Activated B cell treated with CpG ODN at 0.5 μM for 24 hours (primary cell): ENCODE measurements at regions of chr21 and their contacts with region 1.

Region 1: DNA sequence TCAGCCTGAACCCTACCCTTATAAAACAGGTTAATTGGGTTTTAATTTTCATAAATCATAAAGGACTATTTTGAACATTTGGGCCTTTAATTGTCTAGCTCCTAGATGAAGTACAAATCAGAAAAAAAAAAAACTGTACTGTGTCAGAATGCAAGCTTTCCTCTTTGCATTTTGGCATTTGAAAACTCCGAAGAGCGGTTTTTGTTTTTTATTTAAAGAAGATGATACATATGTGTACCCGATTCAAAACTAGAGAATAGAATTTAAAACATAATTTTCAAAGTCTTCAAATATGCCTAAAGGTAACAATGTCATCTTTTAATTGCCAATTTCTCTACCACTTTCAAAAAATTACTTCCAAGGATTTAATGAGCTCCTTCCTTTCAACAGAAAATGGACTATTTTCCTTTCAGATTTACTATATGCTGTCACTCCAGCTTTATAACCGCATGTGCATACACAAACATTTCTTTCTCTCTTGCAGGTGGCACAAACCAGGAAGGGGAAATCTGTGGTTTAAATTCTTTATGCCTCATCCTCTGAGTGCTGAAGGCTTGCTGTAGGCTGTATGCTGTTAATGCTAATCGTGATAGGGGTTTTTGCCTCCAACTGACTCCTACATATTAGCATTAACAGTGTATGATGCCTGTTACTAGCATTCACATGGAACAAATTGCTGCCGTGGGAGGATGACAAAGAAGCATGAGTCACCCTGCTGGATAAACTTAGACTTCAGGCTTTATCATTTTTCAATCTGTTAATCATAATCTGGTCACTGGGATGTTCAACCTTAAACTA is 33.7 kb downstream of the MRPL39 start:
- DNase-seq: no peak
- ATAC-seq: peak; percentile 53
- H3K4me3 Mint-ChIP-seq: peak overlapping the region; percentile 75
- H3K27ac Mint-ChIP-seq: peak overlapping the region; percentile 90
- H3K4me1 Mint-ChIP-seq: peaks cover 90% of the 10 kb centered on the region
- H3K27me3 Mint-ChIP-seq: no peaks in the 10 kb centered on the region
- CTCF ChIP-seq: no peak

Region 2: GRCh38 chr21:25494804-25495203 is 78.8 kb before region 1 on chr21:
- CTCF ChIA-PET with region 1: interaction called, 5 read pairs
- POLR2A ChIA-PET with region 1: interaction called, 11 read pairs
- intact Hi-C with region 1: no loop called
- DNase-seq: no peak
- ATAC-seq: no peak
- H3K4me3 Mint-ChIP-seq: no peak overlapping the region
- H3K27ac Mint-ChIP-seq: no peak overlapping the region
- H3K4me1 Mint-ChIP-seq: peaks cover 46% of the 10 kb centered on the region
- H3K27me3 Mint-ChIP-seq: no peaks in the 10 kb centered on the region
- CTCF ChIP-seq: no peak

Region 3: GRCh38 chr21:25501996-25502665 is 71.5 kb before region 1 on chr21:
- CTCF ChIA-PET with region 1: no interaction called
- POLR2A ChIA-PET with region 1: interaction called, 11 read pairs
- intact Hi-C with region 1: no loop called
- DNase-seq: no peak
- ATAC-seq: peak; percentile 83
- H3K4me3 Mint-ChIP-seq: peak overlapping the region; percentile 32
- H3K27ac Mint-ChIP-seq: peak overlapping the region; percentile 82
- H3K4me1 Mint-ChIP-seq: peaks cover 54% of the 10 kb centered on the region
- H3K27me3 Mint-ChIP-seq: no peaks in the 10 kb centered on the region
- CTCF ChIP-seq: no peak

Region 4: GRCh38 chr21:25509862-25510261 is 63.7 kb before region 1 on chr21:
- CTCF ChIA-PET with region 1: no interaction called
- POLR2A ChIA-PET with region 1: no interaction called
- intact Hi-C with region 1: loop called (anchors 2 kb)
- DNase-seq: no peak
- ATAC-seq: peak; percentile 77
- H3K4me3 Mint-ChIP-seq: peak overlapping the region; percentile 55
- H3K27ac Mint-ChIP-seq: peak overlapping the region; percentile 63
- H3K4me1 Mint-ChIP-seq: peaks cover 45% of the 10 kb centered on the region
- H3K27me3 Mint-ChIP-seq: no peaks in the 10 kb centered on the region
- CTCF ChIP-seq: no peak